Left cardiac atrium (tissue), 4 donors: ENCODE measurements at regions of chr2 and their contacts with region 1.

Region 1: DNA sequence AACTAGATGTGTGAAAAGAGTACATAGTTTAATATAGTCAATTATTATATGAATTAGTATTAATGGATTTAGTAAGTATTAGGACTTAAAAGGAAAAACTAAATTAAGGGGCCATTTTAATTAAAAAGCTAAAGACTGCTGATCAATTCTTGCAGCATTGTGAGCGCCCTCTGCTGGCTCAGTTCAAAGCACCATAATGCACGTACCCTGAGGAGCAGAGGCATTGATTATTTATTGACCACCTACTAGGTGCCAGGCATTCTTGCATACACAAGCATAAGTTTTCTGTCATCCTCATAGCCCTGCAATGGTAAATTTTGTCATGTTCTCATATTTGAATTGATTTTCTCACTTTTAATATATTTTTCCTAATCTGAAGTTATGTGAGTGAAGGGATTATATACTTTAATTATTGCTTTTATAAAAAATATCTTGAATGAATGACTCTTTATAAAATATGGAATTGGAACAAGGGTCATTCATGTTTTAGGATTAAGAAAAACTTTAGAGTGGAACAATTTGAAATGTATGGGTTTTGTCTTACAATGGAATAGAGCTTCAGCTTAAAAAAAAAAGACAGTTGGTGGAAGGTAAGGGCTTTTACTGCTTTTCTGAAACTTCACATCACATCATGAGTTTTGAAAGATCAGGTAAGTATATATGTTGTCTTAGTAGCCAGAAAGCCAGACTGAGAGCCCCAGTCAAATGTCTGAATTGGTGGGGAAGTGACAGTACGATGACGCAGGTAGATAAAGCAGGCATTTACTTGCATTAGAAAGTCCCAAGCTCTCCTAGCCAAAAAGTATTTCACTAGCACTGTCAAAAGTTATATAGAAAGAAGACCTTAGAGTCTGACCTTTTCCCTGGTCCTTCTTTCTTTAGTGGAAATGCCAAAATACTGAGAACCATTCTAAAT is 9.7 kb downstream of the ITGA4 start:
- DNase-seq: peak; percentile 73
- ATAC-seq: no peak

Region 2: GRCh38 chr2:180125245-180125962 is 1341.5 kb before region 1 on chr2:
- intact Hi-C with region 1: loop called in 1 of 2 experiments (anchors 10 kb)
- DNase-seq: peak; percentile 60
- ATAC-seq: peak; percentile 89 to 98

Region 3: GRCh38 chr2:181077128-181077709 is 389.7 kb before region 1 on chr2:
- intact Hi-C with region 1: loop called in 1 of 2 experiments (anchors 10 kb)
- DNase-seq: no peak
- ATAC-seq: peak; percentile 53 to 78

Region 4: GRCh38 chr2:181104512-181105115 is 362.3 kb before region 1 on chr2:
- intact Hi-C with region 1: loop called in 1 of 2 experiments (anchors 10 kb)
- DNase-seq: no peak
- ATAC-seq: no peak